Mucosa of descending colon (tissue), 3 donors: ENCODE measurements at regions of chr20 and their contacts with region 1.

Region 1: GRCh38 chr20:14055127-14055742 is 59.9 kb downstream of the MACROD2 start:
- DNase-seq: peak in 1 of 3 donors; percentile 51
- ATAC-seq: peak; percentile 56
- H3K4me3 ChIP-seq: no peak overlapping the region
- H3K4me1 ChIP-seq: no peaks in the 10 kb centered on the region
- CTCF ChIP-seq: no peak

Region 2: DNA sequence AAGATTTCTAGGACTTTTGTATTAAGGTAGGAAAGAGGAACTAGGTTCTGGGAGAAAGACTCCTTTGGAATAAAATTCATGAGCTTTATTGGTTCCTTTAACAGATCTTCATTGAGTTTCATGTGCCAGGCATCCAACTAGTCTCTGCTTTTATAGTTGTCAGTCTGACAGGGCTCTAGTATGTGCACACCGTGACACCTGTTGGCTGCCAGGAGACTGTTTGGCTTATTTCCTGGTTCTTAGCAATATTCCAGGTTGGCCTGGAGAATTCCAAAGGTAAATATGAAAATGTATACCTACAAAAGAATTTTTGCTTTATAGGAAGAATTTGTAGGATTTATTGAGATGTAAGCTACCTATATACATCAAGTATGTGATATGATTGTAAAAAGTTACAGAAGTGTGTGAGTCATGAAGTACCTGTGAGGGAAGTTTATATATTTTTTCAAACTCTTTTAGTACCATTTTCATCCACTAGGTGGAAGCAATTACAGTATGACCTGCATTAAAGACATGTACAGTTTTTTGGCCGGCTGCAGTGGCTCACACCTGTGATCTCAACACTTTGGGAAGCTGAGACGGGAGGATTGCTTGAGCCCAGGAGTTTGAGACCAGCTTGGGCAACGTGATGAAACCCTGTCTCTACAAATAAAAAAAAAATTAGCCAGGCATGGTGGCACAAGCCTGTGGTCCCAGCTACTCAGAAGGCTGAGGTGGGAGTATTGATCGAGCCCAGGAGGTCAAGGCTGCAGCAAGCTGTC is 235.2 kb before region 1 on chr20:
- intact Hi-C with region 1: loop called (anchors 2 to 10 kb)
- DNase-seq: peak in 2 of 3 donors; percentile 32 to 37
- ATAC-seq: peak; percentile 94
- H3K4me3 ChIP-seq: no peak overlapping the region
- H3K4me1 ChIP-seq: no peaks in the 10 kb centered on the region
- CTCF ChIP-seq: no peak